ENCODE measurements at regions of chr17 and their contacts with region 1.

Region 1: GRCh38 chr17:49707608-49708514 is at the start of gene SLC35B1:
- DNase-seq: peak; percentile 100
- ATAC-seq: peak; percentile 98
- H3K4me3 Mint-ChIP-seq: peak within 1 kb of the TSS; percentile 92
- H3K27ac Mint-ChIP-seq: peak within 1 kb of the TSS; percentile 99
- H3K4me1 Mint-ChIP-seq: peaks cover 32% of the 10 kb centered on the region
- H3K27me3 Mint-ChIP-seq: no peaks in the 10 kb centered on the region
- CTCF ChIP-seq: peak; percentile 77
- total RNA-seq, gene SLC35B1: 38.6 to 46.6 TPM

Region 2: GRCh38 chr17:49567871-49568694 is 139.8 kb before region 1 on chr17:
- CTCF ChIA-PET with region 1: interaction called, 780 read pairs
- POLR2A ChIA-PET with region 1: interaction called, 13 read pairs
- intact Hi-C with region 1: no loop called
- DNase-seq: peak; percentile 90
- ATAC-seq: peak; percentile 61
- H3K4me3 Mint-ChIP-seq: peak overlapping the region; percentile 60
- H3K27ac Mint-ChIP-seq: no peak overlapping the region
- H3K4me1 Mint-ChIP-seq: peaks cover 29% of the 10 kb centered on the region
- H3K27me3 Mint-ChIP-seq: peaks cover 20% of the 10 kb centered on the region
- CTCF ChIP-seq: peak; percentile 97

Region 3: DNA sequence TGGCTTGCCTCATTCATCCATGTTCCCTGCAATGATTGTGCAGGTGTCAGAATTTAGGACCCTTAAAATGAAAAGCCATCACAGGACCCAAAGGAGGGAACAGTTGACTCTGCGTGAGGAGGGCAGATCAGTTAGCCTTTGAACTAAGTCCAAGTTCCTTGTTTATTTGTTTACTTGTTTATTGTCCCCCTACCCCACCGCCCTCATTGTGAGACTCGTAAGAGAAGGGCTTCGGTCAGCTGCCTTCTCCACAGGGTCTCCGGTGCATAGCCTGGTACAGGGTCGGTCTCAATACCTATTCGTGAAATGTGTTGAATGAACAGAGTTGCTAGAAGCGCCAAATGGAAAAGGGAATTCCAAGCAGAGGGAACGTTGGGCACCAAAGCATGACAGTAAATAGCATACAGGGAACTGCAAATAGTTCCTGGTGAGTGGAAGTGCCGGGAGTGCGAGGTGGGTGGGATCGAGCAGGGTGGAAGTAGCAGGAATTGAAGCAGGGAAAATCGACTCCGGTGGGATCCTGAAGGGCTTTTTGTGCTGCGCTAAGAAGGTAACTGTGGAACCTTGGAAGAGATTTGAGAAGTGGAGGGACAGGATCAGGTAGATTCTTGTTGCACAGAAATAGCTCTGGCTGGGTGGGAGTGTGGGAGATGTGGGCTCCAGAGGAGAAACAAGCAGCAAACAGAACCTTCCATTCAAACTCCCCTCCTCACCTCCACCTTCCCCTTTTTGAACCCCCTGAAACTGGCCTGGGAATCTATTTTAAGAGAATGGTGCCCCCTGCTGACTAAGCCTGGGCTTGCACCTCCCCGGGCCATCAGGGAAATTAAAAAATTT is 12.8 kb before region 1 on chr17:
- CTCF ChIA-PET with region 1: interaction called, 81 read pairs
- POLR2A ChIA-PET with region 1: interaction called, 23 read pairs
- intact Hi-C with region 1: no loop called
- DNase-seq: peak; percentile 90
- ATAC-seq: peak; percentile 40
- H3K4me3 Mint-ChIP-seq: peak overlapping the region; percentile 17
- H3K27ac Mint-ChIP-seq: peak overlapping the region; percentile 89
- H3K4me1 Mint-ChIP-seq: peaks cover 52% of the 10 kb centered on the region
- H3K27me3 Mint-ChIP-seq: no peaks in the 10 kb centered on the region
- CTCF ChIP-seq: peak; percentile 94

Region 4: DNA sequence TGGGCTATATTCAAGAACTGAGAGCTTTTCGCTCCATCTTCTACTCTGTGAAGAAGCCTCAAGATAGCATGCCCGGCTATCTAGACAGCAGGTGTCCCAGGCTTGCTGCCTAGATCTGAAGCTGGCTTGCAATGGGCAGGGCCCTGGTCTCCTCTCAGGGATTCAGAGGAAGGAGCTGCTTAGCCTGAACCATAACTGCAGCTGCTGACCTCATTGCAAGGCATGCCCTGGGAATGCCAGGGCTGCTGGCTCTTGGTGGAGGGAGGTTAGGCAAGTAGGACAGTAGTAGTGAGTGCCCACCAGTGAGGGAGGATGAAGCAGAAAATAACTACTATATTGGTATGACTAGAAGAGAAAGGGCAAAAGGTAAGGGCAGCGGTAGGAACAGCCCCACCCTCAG is 21.2 kb after region 1 on chr17:
- CTCF ChIA-PET with region 1: interaction called, 14 read pairs
- POLR2A ChIA-PET with region 1: interaction called, 4 read pairs
- intact Hi-C with region 1: no loop called
- DNase-seq: no peak
- ATAC-seq: no peak
- H3K4me3 Mint-ChIP-seq: no peak overlapping the region
- H3K27ac Mint-ChIP-seq: peak overlapping the region; percentile 63
- H3K4me1 Mint-ChIP-seq: peaks cover 53% of the 10 kb centered on the region
- H3K27me3 Mint-ChIP-seq: no peaks in the 10 kb centered on the region
- CTCF ChIP-seq: no peak

Region 5: GRCh38 chr17:49748791-49749190 is 40.9 kb after region 1 on chr17:
- CTCF ChIA-PET with region 1: interaction called, 13 read pairs
- POLR2A ChIA-PET with region 1: interaction called, 10 read pairs
- intact Hi-C with region 1: loop called (anchors 5 kb)
- DNase-seq: peak; percentile 89
- ATAC-seq: peak; percentile 88
- H3K4me3 Mint-ChIP-seq: peak overlapping the region; percentile 38
- H3K27ac Mint-ChIP-seq: peak overlapping the region; percentile 94
- H3K4me1 Mint-ChIP-seq: peaks cover 82% of the 10 kb centered on the region
- H3K27me3 Mint-ChIP-seq: no peaks in the 10 kb centered on the region
- CTCF ChIP-seq: no peak

Region 6: GRCh38 chr17:49763735-49764558 is 56.1 kb after region 1 on chr17 and contains the start of gene FAM117A:
- CTCF ChIA-PET with region 1: interaction called, 34 read pairs
- POLR2A ChIA-PET with region 1: interaction called, 12 read pairs
- intact Hi-C with region 1: no loop called
- DNase-seq: peak; percentile 99
- ATAC-seq: peak; percentile 96
- H3K4me3 Mint-ChIP-seq: peak within 1 kb of the TSS; percentile 92
- H3K27ac Mint-ChIP-seq: peak within 1 kb of the TSS; percentile 88
- H3K4me1 Mint-ChIP-seq: peaks cover 49% of the 10 kb centered on the region
- H3K27me3 Mint-ChIP-seq: peaks cover 2% of the 10 kb centered on the region
- CTCF ChIP-seq: no peak
- total RNA-seq, gene FAM117A: 19.7 to 23.0 TPM

Region 7: GRCh38 chr17:49788478-49789242 is 80.8 kb after region 1 on chr17 and contains the start of gene KAT7:
- CTCF ChIA-PET with region 1: interaction called, 26 read pairs
- POLR2A ChIA-PET with region 1: interaction called, 19 read pairs
- intact Hi-C with region 1: loop called (anchors 2 kb)
- DNase-seq: peak; percentile 99
- ATAC-seq: peak; percentile 90
- H3K4me3 Mint-ChIP-seq: peak within 1 kb of the TSS; percentile 94
- H3K27ac Mint-ChIP-seq: peak within 1 kb of the TSS; percentile 99
- H3K4me1 Mint-ChIP-seq: peaks cover 50% of the 10 kb centered on the region
- H3K27me3 Mint-ChIP-seq: no peaks in the 10 kb centered on the region
- CTCF ChIP-seq: no peak
- total RNA-seq, gene KAT7: 61.2 to 66.6 TPM

Measured in activated CD8-positive, alpha-beta T cell treated with anti-CD3 and anti-CD28 coated beads for 36 hours (primary cell).